ENCODE measurements at regions of chr22 and their contacts with region 1.

Region 1: GRCh38 chr22:38143036-38143697 is 32.7 kb upstream of the BAIAP2L2 start:
- DNase-seq: no peak
- H3K4me3 ChIP-seq: no peak overlapping the region
- H3K4me3 Mint-ChIP-seq: no peak overlapping the region
- H3K27ac Mint-ChIP-seq: no peak overlapping the region
- H3K4me1 ChIP-seq: no peaks in the 10 kb centered on the region
- H3K4me1 Mint-ChIP-seq: peaks cover 3% of the 10 kb centered on the region
- H3K27me3 ChIP-seq: no peaks in the 10 kb centered on the region
- H3K27me3 Mint-ChIP-seq: no peaks in the 10 kb centered on the region
- CTCF ChIP-seq: no peak

Region 2: DNA sequence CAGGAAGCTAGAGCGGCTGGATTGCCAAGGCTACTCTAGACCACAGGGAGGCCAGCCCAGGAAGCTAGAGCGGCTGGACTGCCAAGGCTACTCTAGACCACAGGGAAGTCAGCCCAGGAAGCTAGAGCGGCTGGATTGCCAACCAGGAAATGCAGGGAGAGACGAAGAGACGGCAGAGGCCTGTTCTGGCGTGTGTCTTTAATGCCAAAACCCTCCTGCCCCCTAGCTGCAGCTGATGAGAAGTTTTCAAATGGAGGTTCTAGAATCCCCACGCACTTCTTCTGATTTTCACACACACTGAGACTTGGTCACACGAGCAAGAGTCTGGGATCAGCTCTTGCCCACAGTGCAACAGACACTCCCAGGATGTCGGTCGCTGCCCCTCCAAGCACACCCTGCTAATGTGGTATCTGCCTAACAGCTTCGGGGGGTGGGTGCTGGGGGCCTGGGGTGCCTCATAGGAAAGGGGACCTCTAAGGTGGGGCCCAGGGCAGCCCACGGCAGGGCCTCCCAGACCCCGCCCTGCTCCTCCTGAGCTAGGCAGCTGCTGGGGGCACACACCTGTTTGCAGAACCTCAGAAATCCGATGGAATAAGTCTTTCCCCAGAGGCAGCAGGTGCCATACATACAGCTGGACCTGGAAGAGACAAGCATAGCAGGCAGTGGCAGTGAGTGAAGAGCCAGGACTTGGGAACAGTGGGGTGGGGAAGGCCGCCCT is 87.1 kb after region 1 on chr22:
- CTCF ChIA-PET with region 1: no interaction called
- POLR2A ChIA-PET with region 1: no interaction called
- intact Hi-C with region 1: no loop called
- DNase-seq: peak in 1 of 2 experiments; percentile 32
- H3K4me3 ChIP-seq: no peak overlapping the region
- H3K4me3 Mint-ChIP-seq: no peak overlapping the region
- H3K27ac Mint-ChIP-seq: no peak overlapping the region
- H3K4me1 ChIP-seq: 0 out of 2 replicates have a peak, but pooled peaks cover 8% of the 10 kb centered on the region
- H3K4me1 Mint-ChIP-seq: peaks cover 6% of the 10 kb centered on the region
- H3K27me3 ChIP-seq: no peaks in the 10 kb centered on the region
- H3K27me3 Mint-ChIP-seq: no peaks in the 10 kb centered on the region
- CTCF ChIP-seq: no peak

Region 3: DNA sequence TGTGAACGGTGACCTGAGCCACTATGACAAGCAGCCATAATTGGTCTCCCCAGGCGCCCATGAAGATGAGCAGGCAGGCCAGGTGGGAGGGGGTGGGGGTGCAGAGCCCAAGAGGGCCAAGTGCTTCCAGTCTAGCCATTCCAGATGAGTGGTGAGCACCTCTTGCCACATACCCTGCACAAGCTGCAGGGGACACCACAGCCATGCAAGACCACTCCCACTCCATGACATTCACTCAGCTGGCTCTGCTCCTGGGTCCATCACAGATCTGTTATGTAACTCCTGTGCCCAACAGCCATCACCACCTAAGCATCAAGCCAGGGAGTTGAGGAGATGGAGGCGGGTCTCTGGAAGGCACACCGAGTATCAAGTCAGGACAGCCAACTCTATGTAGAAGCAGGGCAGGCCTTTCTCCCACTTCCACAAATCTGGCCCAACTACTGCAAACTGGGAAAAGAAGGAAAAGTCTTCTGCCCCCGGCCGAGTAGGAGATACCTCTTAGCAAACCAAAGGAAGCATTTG is 121.2 kb after region 1 on chr22:
- CTCF ChIA-PET with region 1: interaction called, 12 read pairs
- POLR2A ChIA-PET with region 1: no interaction called
- intact Hi-C with region 1: no loop called
- DNase-seq: no peak
- H3K4me3 ChIP-seq: no peak overlapping the region
- H3K4me3 Mint-ChIP-seq: no peak overlapping the region
- H3K27ac Mint-ChIP-seq: no peak overlapping the region
- H3K4me1 ChIP-seq: no peaks in the 10 kb centered on the region; the same call in 1 of the 2 replicates
- H3K4me1 Mint-ChIP-seq: peaks cover 7% of the 10 kb centered on the region
- H3K27me3 ChIP-seq: no peaks in the 10 kb centered on the region
- H3K27me3 Mint-ChIP-seq: no peaks in the 10 kb centered on the region
- CTCF ChIP-seq: no peak